Panc1 (cell line): ENCODE measurements at regions of chr6 and their contacts with region 1.

Region 1: DNA sequence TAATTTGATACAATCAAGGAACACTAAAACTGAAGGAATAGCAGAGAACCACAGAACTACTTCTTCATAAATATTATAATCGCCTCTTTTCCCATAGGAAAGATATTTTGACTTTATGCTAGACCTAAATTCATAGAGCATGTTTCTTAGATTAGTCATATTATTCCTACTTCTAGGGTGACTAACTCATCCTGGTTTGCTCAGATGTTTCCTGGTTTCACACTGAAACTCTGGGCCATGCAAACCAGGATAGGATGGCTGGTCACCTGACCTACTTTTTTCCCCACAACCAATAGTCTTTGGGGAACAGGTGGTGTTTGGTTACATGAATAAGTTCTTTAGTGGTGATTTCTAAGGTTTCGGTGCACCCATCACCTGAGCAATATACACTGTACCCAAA is 42.8 kb downstream of the MMS22L start:
- DNase-seq: no peak
- ATAC-seq: no peak
- H3K4me3 ChIP-seq: no peak overlapping the region
- H3K27ac ChIP-seq: no peak overlapping the region
- H3K4me1 ChIP-seq: no peaks in the 10 kb centered on the region
- H3K27me3 ChIP-seq: no peaks in the 10 kb centered on the region
- CTCF ChIP-seq: no peak

Region 2: DNA sequence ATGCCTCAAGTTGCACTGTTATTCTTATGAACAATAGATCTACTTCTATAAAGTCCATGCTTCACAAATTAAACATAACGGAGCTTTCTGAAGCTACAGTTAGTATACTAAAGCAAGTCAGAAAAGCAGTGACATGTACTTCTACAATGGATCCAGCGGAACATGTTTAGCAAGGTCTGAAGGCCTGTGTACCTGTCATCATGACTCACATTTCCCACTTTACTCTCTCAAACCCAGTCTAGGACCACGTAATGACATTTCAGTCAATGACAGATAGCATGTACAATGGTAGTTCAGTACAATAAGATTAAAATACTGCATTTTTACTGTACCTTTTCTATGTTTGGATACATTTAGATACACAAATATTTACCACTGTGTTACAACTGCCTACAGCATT is 89.3 kb before region 1 on chr6:
- CTCF ChIA-PET with region 1: no interaction called
- POLR2A ChIA-PET with region 1: no interaction called
- in situ Hi-C with region 1: no loop called
- intact Hi-C with region 1: no loop called
- DNase-seq: no peak
- ATAC-seq: no peak
- H3K4me3 ChIP-seq: no peak overlapping the region
- H3K27ac ChIP-seq: no peak overlapping the region
- H3K4me1 ChIP-seq: no peaks in the 10 kb centered on the region
- H3K27me3 ChIP-seq: no peaks in the 10 kb centered on the region
- CTCF ChIP-seq: no peak

Region 3: GRCh38 chr6:97215157-97215769 is 25.0 kb before region 1 on chr6:
- CTCF ChIA-PET with region 1: interaction called, 10 read pairs
- POLR2A ChIA-PET with region 1: no interaction called
- in situ Hi-C with region 1: no loop called
- intact Hi-C with region 1: no loop called
- DNase-seq: peak; percentile 22
- ATAC-seq: peak; percentile 69; the same call in 1 of the 2 replicates
- H3K4me3 ChIP-seq: no peak overlapping the region
- H3K27ac ChIP-seq: no peak overlapping the region
- H3K4me1 ChIP-seq: no peaks in the 10 kb centered on the region; the same call in 1 of the 2 replicates
- H3K27me3 ChIP-seq: no peaks in the 10 kb centered on the region
- CTCF ChIP-seq: peak; percentile 67

Region 4: DNA sequence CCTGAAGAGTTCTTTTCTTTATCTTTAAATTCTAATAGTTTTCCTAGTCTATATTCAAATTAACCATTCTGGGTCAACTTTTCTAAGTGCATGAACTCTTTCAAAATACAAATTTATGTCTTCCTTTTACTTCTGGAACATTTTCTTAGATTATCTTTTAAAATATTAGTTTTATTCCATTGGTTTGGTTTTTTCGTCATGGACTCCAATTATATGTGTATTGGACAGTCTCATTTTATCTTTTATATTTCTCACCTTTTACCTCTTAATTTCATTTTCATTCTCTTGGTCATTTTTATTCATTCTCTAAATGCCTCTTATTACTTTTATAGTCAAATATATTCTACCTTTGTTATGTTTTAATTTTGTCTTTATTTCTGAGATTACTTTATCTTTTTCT is 399.5 kb after region 1 on chr6:
- CTCF ChIA-PET with region 1: no interaction called
- POLR2A ChIA-PET with region 1: no interaction called
- in situ Hi-C with region 1: no loop called
- intact Hi-C with region 1: no loop called
- DNase-seq: no peak
- ATAC-seq: no peak
- H3K4me3 ChIP-seq: no peak overlapping the region
- H3K27ac ChIP-seq: no peak overlapping the region
- H3K4me1 ChIP-seq: no peaks in the 10 kb centered on the region
- H3K27me3 ChIP-seq: no peaks in the 10 kb centered on the region
- CTCF ChIP-seq: no peak